ENCODE measurements at regions of chr17 and their contacts with region 1.

Region 1: GRCh38 chr17:27609611-27610303 is 21.2 kb upstream of the LGALS9 start:
- DNase-seq: peak in 3 of 5 donors; percentile 29 to 63 (median 59)
- ATAC-seq: peak; percentile 45 to 81 (median 72)
- H3K4me3 ChIP-seq: no peak overlapping the region
- H3K27ac ChIP-seq: peak overlapping the region in 1 of 12 donors; percentile 34
- H3K4me1 ChIP-seq: peaks cover 0 to 10% (median 0%) of the 10 kb centered on the region in 12 donors
- H3K27me3 ChIP-seq: no peaks in the 10 kb centered on the region
- CTCF ChIP-seq: peak; percentile 43 to 71 (median 64)
- POLR2A ChIP-seq: no peak

Region 2: DNA sequence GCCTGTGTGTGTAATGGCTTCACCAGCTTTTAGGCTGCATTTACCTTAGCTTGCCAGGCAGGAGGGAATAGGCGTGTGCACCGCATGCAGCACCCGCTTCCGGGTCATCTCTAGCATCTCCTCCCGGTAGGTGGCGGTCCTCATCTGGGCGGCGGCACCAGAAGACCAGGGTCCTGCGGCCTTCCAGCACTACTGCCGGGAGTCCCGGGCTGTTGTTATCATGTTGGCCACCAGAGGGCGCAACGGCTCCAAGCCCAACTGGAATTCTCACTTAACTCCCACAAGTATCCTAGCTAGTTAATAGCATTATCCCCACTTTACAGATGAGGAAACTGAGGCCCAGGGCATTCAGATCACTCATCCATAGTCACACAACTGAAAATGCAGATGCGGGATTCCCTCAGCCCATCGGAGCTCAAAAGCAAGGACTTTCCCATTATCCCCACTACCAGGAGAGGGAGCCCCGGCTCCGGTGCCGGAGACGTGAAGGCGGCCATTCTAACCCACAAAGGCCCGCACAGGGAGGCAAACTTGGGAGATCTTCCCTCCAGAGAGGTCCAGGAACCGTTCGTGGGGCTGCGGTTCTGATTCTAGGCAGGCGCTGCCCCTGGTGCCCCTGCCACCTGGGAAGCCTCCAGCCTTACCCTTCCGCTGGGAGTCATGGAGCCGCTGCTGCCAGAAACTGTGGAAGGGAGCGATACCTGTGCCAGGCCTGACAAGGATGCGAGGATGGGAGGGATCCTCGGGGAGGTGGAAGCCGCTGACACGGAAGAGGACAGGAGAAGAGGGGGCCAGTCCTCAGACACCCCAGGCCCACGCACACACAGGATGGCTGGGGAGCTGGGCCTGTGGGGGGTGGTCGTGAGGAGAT is 45.1 kb after region 1 on chr17:
- intact Hi-C with region 1: loop called in 5 of 10 experiments (anchors 1 to 2 kb)
- DNase-seq: peak; percentile 50 to 82 (median 69)
- ATAC-seq: peak in 3 of 4 donors; percentile 35 to 46 (median 40)
- H3K4me3 ChIP-seq: no peak overlapping the region
- H3K27ac ChIP-seq: no peak overlapping the region
- H3K4me1 ChIP-seq: peaks cover 0 to 5% (median 0%) of the 10 kb centered on the region in 12 donors
- H3K27me3 ChIP-seq: no peaks in the 10 kb centered on the region
- CTCF ChIP-seq: peak; percentile 83 to 99 (median 92)
- POLR2A ChIP-seq: no peak

Region 3: DNA sequence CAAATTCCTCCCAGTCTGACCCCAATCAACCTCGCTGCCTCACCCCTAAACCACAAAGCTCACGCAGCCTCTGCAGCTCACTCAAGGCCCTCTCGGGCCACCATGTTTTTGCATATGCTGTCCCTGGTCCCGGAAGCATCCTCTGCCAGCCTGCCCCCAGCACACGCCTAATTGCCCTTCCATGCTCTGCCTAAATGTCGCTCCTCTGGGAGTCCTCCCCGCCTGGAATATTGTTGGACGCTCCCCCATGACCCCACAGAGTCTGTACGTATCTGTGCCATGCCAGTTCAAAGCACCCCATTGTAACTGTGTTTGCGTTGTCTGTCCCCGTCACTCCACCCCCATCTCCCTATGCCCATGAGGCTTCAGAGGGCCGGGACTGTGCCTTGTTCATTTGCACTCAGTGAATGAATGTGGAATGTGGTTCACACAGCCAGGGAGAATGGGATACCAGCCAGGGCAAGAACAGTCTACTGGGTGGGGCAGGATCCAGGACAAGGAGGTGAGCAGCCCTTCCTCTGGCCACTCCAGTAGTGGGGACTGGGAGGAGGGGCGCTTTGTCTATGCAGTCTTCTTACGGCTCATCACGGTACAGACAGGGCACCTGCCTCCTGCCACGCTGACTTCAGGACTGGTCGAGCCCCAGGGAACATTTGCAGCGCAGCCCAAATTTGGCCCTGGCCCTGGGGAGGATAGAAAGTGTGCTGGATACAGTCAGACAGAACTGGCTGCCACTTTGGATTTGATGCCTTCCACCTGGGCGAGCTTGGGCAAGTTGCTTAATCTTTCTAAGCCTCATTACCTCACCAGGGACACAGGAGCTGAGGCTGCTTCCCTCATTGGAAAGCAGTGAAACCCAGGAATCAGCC is 142.1 kb after region 1 on chr17:
- intact Hi-C with region 1: loop called in 6 of 10 experiments (anchors 2 to 10 kb)
- DNase-seq: no peak
- ATAC-seq: peak in 3 of 4 donors; percentile 23 to 50 (median 35)
- H3K4me3 ChIP-seq: no peak overlapping the region
- H3K27ac ChIP-seq: no peak overlapping the region
- H3K4me1 ChIP-seq: peaks cover 0 to 3% (median 0%) of the 10 kb centered on the region in 12 donors
- H3K27me3 ChIP-seq: no peaks in the 10 kb centered on the region
- CTCF ChIP-seq: no peak
- POLR2A ChIP-seq: no peak

Region 4: GRCh38 chr17:27760069-27760885 is 150.5 kb after region 1 on chr17:
- intact Hi-C with region 1: loop called in 6 of 10 experiments (anchors 2 to 10 kb)
- DNase-seq: peak; percentile 46 to 81 (median 65)
- ATAC-seq: peak in 3 of 4 donors; percentile 52 to 57 (median 55)
- H3K4me3 ChIP-seq: no peak overlapping the region
- H3K27ac ChIP-seq: no peak overlapping the region
- H3K4me1 ChIP-seq: no peaks in the 10 kb centered on the region
- H3K27me3 ChIP-seq: no peaks in the 10 kb centered on the region
- CTCF ChIP-seq: peak; percentile 76 to 95 (median 90)
- POLR2A ChIP-seq: no peak

Region 5: DNA sequence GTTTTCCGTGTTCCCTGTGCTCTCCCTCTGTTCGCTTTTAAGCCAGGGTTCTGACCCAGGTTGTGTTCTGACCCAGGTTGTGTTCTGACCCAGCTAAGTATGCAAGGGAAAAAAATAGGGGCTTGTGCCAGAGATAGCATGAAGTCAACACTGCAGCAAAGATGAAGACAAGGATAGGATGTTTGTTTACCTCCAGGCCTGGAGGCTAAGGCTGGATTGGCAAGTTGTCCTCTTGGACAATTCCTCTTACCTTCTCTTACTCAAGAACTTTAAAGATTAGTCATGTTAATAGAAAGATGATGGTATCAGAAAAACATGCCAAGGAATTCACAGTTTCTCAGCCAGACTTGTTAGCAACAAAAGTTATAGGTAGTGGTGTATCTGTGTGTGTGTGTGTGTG is 264.0 kb after region 1 on chr17:
- intact Hi-C with region 1: loop called in 1 of 10 experiments (anchors 5 kb)
- DNase-seq: no peak
- ATAC-seq: no peak
- H3K4me3 ChIP-seq: no peak overlapping the region
- H3K27ac ChIP-seq: no peak overlapping the region
- H3K4me1 ChIP-seq: no peaks in the 10 kb centered on the region
- H3K27me3 ChIP-seq: no peaks in the 10 kb centered on the region
- CTCF ChIP-seq: no peak
- POLR2A ChIP-seq: no peak